Activated CD4-positive, alpha-beta memory T cell treated with anti-CD3 and anti-CD28 coated beads for 36 hours (primary cell): ENCODE measurements at regions of chr7 and their contacts with region 1.

Region 1: GRCh38 chr7:120941064-120941463 is 9.5 kb upstream of the ING3 start:
- DNase-seq: no peak
- H3K4me3 Mint-ChIP-seq: no peak overlapping the region
- H3K27ac Mint-ChIP-seq: no peak overlapping the region
- H3K4me1 Mint-ChIP-seq: no peaks in the 10 kb centered on the region
- H3K27me3 Mint-ChIP-seq: no peaks in the 10 kb centered on the region

Region 2: DNA sequence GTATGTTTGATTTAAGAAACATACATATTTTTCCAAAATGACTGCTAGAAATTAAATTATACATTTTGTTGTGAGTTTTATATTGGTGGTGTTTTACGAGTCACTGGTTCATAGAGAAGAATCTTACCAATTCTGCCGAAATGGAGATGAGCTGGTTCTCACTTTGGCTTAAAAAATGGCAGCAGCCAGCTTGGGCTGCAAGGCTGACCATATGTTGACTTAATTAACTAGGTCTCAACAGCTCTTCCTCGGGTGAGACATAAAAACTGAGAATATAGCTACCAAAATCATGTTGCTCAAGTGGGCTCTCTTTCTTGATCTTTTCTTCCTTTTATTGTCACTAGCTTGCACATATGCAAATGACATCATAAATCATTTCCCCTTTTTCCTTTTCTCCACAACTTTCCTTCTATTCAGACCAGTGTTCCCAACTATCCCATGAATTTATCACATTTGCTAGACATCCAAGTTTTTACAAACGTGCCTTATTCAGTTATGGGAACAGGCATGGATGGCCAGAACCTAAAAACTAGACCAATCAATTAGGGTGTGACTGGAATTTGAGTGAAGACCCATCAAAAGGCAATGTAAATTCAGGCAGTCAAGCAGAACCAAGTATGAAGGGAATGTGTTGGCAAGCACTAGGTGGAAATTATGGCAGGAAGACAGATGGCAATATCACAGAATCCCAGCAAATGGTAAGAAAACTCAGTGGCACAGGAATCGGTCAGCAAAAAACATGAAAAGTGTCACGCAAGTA is 76.7 kb before region 1 on chr7:
- CTCF ChIA-PET with region 1: no interaction called
- POLR2A ChIA-PET with region 1: no interaction called
- intact Hi-C with region 1: loop called (anchors 5 kb)
- DNase-seq: no peak
- H3K4me3 Mint-ChIP-seq: no peak overlapping the region
- H3K27ac Mint-ChIP-seq: no peak overlapping the region
- H3K4me1 Mint-ChIP-seq: no peaks in the 10 kb centered on the region
- H3K27me3 Mint-ChIP-seq: peaks cover 29% of the 10 kb centered on the region